ENCODE measurements at regions of chr11 and their contacts with region 1.

Region 1: GRCh38 chr11:46616998-46617675 is at the starts of genes ATG13 and HARBI1:
- DNase-seq: peak; percentile 51
- H3K4me3 ChIP-seq: peak within 1 kb of the TSS; percentile 100
- H3K27ac ChIP-seq: peak within 1 kb of the TSS; percentile 97
- H3K27me3 ChIP-seq: no peaks in the 10 kb centered on the region
- CTCF ChIP-seq: no peak
- polyA plus RNA-seq, gene ATG13: 57.9 and 62.5 TPM in 2 replicates
- polyA plus RNA-seq, gene HARBI1: 4.3 and 4.4 TPM in 2 replicates

Region 2: DNA sequence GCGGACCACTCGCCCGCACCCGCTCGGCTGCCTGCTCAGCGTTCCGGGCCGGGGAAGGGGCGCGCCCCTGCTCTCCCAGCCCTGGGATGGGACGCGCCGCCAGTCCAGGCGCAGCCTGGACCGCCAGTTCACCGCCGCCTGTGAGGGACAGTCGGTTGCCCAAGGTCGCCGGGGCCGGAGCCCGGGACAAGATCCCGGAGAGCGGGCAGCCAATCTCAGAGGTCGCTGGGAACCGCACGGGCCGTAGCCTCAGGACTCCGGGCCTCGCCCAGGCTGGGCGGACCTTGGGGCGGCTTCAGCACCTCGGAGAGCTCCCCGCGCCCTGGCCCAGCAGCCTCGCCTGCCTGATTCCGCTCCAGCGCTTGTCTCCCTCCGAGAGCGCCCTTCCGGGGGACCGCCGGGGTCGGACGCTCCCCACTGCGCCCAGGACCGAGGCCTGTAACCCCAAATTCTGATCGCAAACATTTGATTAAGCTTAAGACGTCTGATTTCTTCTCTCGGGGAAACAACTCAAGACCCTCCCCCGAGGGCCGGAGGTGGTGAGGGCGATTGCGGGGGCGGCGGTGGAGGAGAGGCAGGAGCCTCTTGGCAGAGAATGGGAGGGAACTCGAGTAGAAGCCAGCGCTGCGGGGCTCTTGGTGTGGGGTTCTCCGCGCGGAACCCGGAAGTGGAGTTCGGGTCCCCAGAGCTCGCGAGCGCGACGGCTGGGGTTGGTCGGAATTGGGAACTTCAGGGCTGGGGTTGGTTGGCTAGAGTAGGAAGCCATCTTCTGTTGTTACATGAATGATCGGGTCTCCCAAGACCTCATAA is 224.5 kb before region 1 on chr11:
- CTCF ChIA-PET with region 1: interaction called, 18 read pairs
- POLR2A ChIA-PET with region 1: no interaction called
- DNase-seq: peak; percentile 48
- H3K4me3 ChIP-seq: peak overlapping the region; percentile 48
- H3K27ac ChIP-seq: no peak overlapping the region
- H3K27me3 ChIP-seq: peaks cover 29% of the 10 kb centered on the region
- CTCF ChIP-seq: no peak

Region 3: GRCh38 chr11:46593550-46594373 is 23.4 kb before region 1 on chr11 and contains the start of gene AMBRA1:
- CTCF ChIA-PET with region 1: no interaction called
- POLR2A ChIA-PET with region 1: interaction called, 15 read pairs
- DNase-seq: peak; percentile 81
- H3K4me3 ChIP-seq: peak within 1 kb of the TSS; percentile 88
- H3K27ac ChIP-seq: peak within 1 kb of the TSS; percentile 52
- H3K27me3 ChIP-seq: no peaks in the 10 kb centered on the region
- CTCF ChIP-seq: no peak
- polyA plus RNA-seq, gene AMBRA1: 12.2 and 12.8 TPM in 2 replicates

Region 4: DNA sequence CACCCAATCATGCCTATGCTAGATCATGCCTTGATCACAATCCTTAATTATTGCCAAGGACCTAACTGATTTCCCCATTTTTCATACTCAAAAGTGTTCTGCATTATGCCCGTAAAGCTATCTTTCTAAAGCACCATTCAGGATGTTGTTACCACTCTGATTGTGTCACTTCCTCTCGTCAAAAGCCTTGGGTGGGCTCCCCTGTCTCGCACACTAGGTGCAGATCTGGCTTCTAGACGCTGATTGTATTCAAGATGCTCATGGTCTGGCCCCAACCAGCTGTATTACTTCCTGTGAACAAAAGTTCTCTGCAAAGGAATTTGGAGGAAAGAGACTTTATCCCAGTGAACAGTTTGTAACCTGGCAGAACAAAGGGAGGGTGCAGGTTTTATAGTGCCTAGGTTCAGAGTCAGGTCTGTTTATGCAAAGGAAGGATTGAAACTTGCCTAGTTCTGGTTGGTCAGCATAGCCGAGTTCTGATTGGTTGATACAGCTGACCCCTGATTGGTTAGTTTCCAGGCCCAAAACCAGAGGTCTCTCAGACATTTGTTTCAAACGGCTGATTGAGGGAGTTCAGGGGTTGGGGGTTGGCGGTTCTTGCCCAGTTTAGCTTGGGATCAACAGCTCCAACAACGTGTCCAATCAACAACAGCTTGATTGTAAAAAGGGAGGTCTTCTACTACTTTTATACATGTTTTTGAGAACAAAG is 25.6 kb after region 1 on chr11:
- CTCF ChIA-PET with region 1: interaction called, 11 read pairs
- POLR2A ChIA-PET with region 1: no interaction called
- DNase-seq: no peak
- H3K4me3 ChIP-seq: no peak overlapping the region
- H3K27ac ChIP-seq: no peak overlapping the region
- H3K27me3 ChIP-seq: no peaks in the 10 kb centered on the region
- CTCF ChIP-seq: no peak